Mammary epithelial cell (primary cell): ENCODE measurements at regions of chr6 and their contacts with region 1.

Region 1: GRCh38 chr6:31689249-31690110 is 8.6 kb upstream of the LY6G5C start:
- DNase-seq: no peak
- H3K4me3 ChIP-seq: no peak overlapping the region
- H3K27ac ChIP-seq: no peak overlapping the region
- H3K4me1 ChIP-seq: no peaks in the 10 kb centered on the region
- H3K27me3 ChIP-seq: no peaks in the 10 kb centered on the region
- CTCF ChIP-seq: peak; percentile 36 to 46

Region 2: GRCh38 chr6:30914076-30914853 is 775.2 kb before region 1 on chr6 and contains the start of gene VARS2:
- CTCF ChIA-PET with region 1: no interaction called
- dilution Hi-C with region 1: no loop called
- in situ Hi-C with region 1: no loop called
- intact Hi-C with region 1: no loop called
- DNase-seq: peak; percentile 94
- H3K4me3 ChIP-seq: peak within 1 kb of the TSS; percentile 23 to 65 (median 50)
- H3K27ac ChIP-seq: peak within 1 kb of the TSS; percentile 55
- H3K4me1 ChIP-seq: peaks cover 26% of the 10 kb centered on the region
- H3K27me3 ChIP-seq: no peaks in the 10 kb centered on the region
- CTCF ChIP-seq: peak; percentile 26 to 59
- total RNA-seq, gene VARS2: 17.7 to 25.7 TPM

Region 3: DNA sequence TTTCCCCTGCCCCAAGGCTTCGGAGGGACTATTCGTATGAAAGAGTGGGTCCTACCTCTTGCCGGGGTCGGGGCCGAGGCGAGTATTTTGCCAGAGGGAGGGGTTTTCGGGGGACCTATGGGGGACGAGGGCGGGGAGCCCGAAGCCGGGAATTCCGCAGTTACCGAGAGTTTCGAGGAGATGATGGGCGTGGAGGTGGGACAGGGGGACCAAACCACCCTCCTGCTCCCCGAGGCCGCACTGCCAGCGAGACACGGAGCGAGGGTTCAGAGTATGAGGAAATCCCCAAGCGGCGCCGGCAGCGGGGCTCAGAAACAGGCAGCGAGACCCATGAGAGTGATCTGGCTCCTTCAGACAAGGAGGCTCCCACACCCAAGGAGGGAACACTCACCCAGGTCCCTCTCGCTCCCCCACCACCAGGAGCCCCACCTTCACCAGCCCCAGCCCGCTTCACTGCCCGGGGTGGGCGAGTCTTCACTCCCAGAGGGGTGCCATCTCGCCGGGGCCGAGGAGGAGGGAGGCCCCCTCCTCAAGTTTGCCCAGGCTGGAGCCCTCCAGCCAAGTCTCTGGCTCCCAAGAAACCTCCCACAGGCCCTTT is 57.7 kb before region 1 on chr6:
- CTCF ChIA-PET with region 1: no interaction called
- dilution Hi-C with region 1: no loop called
- in situ Hi-C with region 1: no loop called
- intact Hi-C with region 1: no loop called
- DNase-seq: no peak
- H3K4me3 ChIP-seq: no peak overlapping the region
- H3K27ac ChIP-seq: no peak overlapping the region
- H3K4me1 ChIP-seq: no peaks in the 10 kb centered on the region
- H3K27me3 ChIP-seq: no peaks in the 10 kb centered on the region
- CTCF ChIP-seq: no peak

Region 4: GRCh38 chr6:31645325-31645724 is 44.2 kb before region 1 on chr6:
- CTCF ChIA-PET with region 1: no interaction called
- dilution Hi-C with region 1: loop called (anchors 5 kb)
- in situ Hi-C with region 1: no loop called
- intact Hi-C with region 1: no loop called
- DNase-seq: no peak
- H3K4me3 ChIP-seq: no peak overlapping the region
- H3K27ac ChIP-seq: no peak overlapping the region
- H3K4me1 ChIP-seq: no peaks in the 10 kb centered on the region
- H3K27me3 ChIP-seq: no peaks in the 10 kb centered on the region
- CTCF ChIP-seq: no peak

Region 5: GRCh38 chr6:31729515-31729978 is 40.1 kb after region 1 on chr6:
- CTCF ChIA-PET with region 1: no interaction called
- dilution Hi-C with region 1: loop called (anchors 5 kb)
- in situ Hi-C with region 1: no loop called
- intact Hi-C with region 1: no loop called
- DNase-seq: peak; percentile 80
- H3K4me3 ChIP-seq: peak overlapping the region; percentile 43 to 71 (median 46)
- H3K27ac ChIP-seq: no peak overlapping the region
- H3K4me1 ChIP-seq: peaks cover 24% of the 10 kb centered on the region
- H3K27me3 ChIP-seq: no peaks in the 10 kb centered on the region
- CTCF ChIP-seq: no peak